ENCODE measurements at regions of chr12 and their contacts with region 1.

Region 1: GRCh38 chr12:132144115-132144812 is at the starts of genes DDX51 and NOC4L:
- DNase-seq: peak; percentile 91
- H3K4me3 ChIP-seq: peak within 1 kb of the TSS; percentile 90 to 99 (median 99)
- H3K27ac ChIP-seq: peak within 1 kb of the TSS; percentile 57
- H3K4me1 ChIP-seq: peaks cover 20% of the 10 kb centered on the region
- H3K27me3 ChIP-seq: no peaks in the 10 kb centered on the region
- CTCF ChIP-seq: no peak
- total RNA-seq, gene DDX51: 8.8 to 20.4 TPM
- total RNA-seq, gene NOC4L: 17.5 to 27.7 TPM

Region 2: GRCh38 chr12:132018193-132018916 is 125.9 kb before region 1 on chr12:
- CTCF ChIA-PET with region 1: no interaction called
- dilution Hi-C with region 1: no loop called
- in situ Hi-C with region 1: no loop called
- intact Hi-C with region 1: no loop called
- DNase-seq: no peak
- H3K4me3 ChIP-seq: no peak overlapping the region
- H3K27ac ChIP-seq: no peak overlapping the region
- H3K4me1 ChIP-seq: no peaks in the 10 kb centered on the region
- H3K27me3 ChIP-seq: no peaks in the 10 kb centered on the region
- CTCF ChIP-seq: no peak

Region 3: GRCh38 chr12:132071040-132071810 is 73.0 kb before region 1 on chr12:
- CTCF ChIA-PET with region 1: no interaction called
- dilution Hi-C with region 1: loop called (anchors 5 kb)
- in situ Hi-C with region 1: no loop called
- intact Hi-C with region 1: no loop called
- DNase-seq: no peak
- H3K4me3 ChIP-seq: no peak overlapping the region
- H3K27ac ChIP-seq: no peak overlapping the region
- H3K4me1 ChIP-seq: no peaks in the 10 kb centered on the region
- H3K27me3 ChIP-seq: no peaks in the 10 kb centered on the region
- CTCF ChIP-seq: no peak

Region 4: DNA sequence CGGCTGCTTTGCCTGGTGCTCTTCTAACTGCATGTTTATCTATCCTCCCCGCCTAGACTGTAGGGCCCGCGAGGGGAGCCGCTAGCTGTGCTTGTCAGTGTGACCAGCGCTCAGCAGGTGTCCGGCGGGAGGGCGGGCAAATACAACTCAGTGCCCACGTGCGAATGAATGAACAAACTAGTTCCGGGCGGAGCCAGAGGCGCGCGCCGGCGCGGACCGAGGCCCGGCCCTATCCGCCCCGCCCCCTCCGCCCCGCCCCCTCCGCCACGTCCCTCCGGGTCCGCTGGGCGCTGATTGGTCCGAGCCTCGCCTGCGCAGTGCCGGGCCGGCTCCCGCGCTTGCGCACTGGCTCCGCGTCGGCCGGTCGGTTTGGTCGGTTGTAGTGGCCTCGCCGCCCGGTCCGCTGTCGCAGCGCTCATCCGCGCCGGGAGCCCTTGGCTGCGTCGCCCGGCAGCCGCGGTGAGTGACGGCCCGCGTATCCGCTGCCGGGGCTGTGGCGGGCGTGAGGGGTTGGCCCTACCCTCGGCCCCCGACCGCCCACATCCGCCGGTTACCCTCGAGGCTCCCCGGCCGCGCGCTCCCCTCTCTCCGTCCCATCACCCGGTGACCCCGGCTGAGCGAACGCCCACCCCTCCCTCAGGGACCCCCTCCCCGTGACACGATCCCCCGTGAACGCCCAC is 60.2 kb before region 1 on chr12:
- CTCF ChIA-PET with region 1: no interaction called
- dilution Hi-C with region 1: no loop called
- in situ Hi-C with region 1: no loop called
- intact Hi-C with region 1: no loop called
- DNase-seq: peak; percentile 86
- H3K4me3 ChIP-seq: peak overlapping the region; percentile 52 to 89 (median 85)
- H3K27ac ChIP-seq: peak overlapping the region; percentile 58
- H3K4me1 ChIP-seq: peaks cover 12% of the 10 kb centered on the region
- H3K27me3 ChIP-seq: no peaks in the 10 kb centered on the region
- CTCF ChIP-seq: no peak

Region 5: GRCh38 chr12:132660052-132660451 is 515.8 kb after region 1 on chr12:
- CTCF ChIA-PET with region 1: no interaction called
- dilution Hi-C with region 1: no loop called
- in situ Hi-C with region 1: no loop called
- intact Hi-C with region 1: no loop called
- DNase-seq: no peak
- H3K4me3 ChIP-seq: no peak overlapping the region
- H3K27ac ChIP-seq: no peak overlapping the region
- H3K4me1 ChIP-seq: no peaks in the 10 kb centered on the region
- H3K27me3 ChIP-seq: no peaks in the 10 kb centered on the region
- CTCF ChIP-seq: no peak